K562 (cell line): ENCODE measurements at regions of chr2 and their contacts with region 1.

Region 1: DNA sequence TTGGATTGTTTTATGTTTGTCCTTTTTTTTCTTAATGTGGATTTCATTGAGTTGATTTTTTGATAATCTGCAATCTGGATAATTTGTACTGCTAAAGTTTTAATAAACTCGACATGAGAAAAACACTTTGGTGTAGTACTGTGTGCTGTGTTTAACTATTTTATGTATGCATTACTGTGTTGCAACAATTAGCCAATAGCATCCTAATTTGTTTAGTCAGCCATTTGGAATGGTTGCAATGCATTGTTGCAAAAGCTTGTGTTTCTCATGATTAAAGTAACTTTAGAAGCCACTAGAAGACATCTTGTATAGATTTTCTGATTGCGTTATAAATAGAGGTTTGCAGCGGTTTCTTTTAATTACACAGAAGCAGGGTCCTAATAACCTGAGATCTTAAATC is 53.5 kb downstream of the PPIG start:
- DNase-seq: no peak
- ATAC-seq: no peak
- H3K4me3 ChIP-seq: no peak overlapping the region
- H3K27ac ChIP-seq: no peak overlapping the region
- H3K4me1 ChIP-seq: no peaks in the 10 kb centered on the region
- H3K27me3 ChIP-seq: no peaks in the 10 kb centered on the region
- CTCF ChIP-seq: no peak
- EP300 ChIP-seq: no peak
- POLR2A ChIP-seq: no peak
- RAD21 ChIP-seq: no peak

Region 2: DNA sequence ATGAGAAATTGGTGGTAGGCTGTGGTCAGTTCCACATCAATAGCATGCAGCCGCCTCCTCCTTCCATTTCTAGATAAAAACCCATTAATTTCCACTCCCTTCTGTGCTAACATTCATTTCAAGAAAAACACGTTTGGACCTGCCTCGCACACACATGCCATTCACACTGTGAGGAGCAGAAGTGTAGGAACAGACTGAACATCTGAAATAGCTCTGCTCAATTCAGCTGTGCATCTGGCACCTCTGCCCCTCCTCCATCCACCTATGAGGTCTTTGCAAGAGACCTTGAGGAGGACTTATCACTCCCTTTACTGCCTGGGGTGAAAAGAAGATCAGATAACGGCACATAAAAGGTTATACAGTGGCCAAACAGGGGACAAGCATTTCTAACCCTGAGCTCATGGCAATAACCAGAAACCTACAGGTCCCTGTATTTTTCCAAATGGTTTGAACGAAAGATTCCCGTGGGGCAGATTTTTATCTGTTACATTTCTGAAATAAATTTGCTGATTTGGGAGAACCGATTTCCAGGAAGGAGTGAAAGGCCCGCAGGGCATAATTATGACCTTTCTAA is 244.5 kb before region 1 on chr2:
- CTCF ChIA-PET with region 1: no interaction called
- POLR2A ChIA-PET with region 1: no interaction called
- in situ Hi-C with region 1: no loop called
- intact Hi-C with region 1: no loop called
- DNase-seq: no peak
- ATAC-seq: no peak
- H3K4me3 ChIP-seq: no peak overlapping the region
- H3K27ac ChIP-seq: no peak overlapping the region
- H3K4me1 ChIP-seq: peaks cover 0 to 6% of the 10 kb centered on the region in 2 experiments; a peak in 2 of 5 replicates
- H3K27me3 ChIP-seq: peaks cover 5 to 9% of the 10 kb centered on the region in 2 experiments; a peak in 3 of 5 replicates
- CTCF ChIP-seq: no peak
- EP300 ChIP-seq: no peak
- POLR2A ChIP-seq: no peak
- RAD21 ChIP-seq: no peak

Region 3: DNA sequence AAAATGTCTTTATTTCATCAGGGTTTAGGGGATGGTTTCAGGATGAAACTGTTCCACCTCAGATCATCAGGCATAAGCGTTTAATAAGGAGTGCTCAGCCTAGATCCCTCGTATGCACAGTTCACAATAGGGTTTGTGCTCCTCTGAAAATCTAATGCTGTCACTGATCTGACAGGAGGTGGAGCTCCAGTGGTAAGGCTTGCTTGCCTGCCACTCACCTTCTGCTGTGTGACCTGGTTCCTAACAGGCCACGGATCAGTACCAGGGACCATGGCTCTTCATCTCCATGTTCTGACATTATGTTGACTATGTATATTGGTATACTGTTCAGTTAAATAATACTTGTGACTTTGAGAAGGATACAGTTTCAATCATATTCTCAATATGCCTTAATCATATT is 11.8 kb before region 1 on chr2:
- CTCF ChIA-PET with region 1: no interaction called
- POLR2A ChIA-PET with region 1: interaction called, 17 read pairs
- in situ Hi-C with region 1: no loop called
- intact Hi-C with region 1: no loop called
- DNase-seq: peak in 1 of 4 experiments; percentile 17
- ATAC-seq: peak; percentile 57
- H3K4me3 ChIP-seq: no peak overlapping the region
- H3K27ac ChIP-seq: no peak overlapping the region
- H3K4me1 ChIP-seq: no peaks in the 10 kb centered on the region
- H3K27me3 ChIP-seq: no peaks in the 10 kb centered on the region
- CTCF ChIP-seq: peak in 1 of 3 experiments; percentile 37; a peak in 2 of 6 replicates
- EP300 ChIP-seq: no peak
- POLR2A ChIP-seq: no peak
- RAD21 ChIP-seq: peak in 1 of 2 experiments; percentile 56; a peak in 3 of 4 replicates

Region 4: DNA sequence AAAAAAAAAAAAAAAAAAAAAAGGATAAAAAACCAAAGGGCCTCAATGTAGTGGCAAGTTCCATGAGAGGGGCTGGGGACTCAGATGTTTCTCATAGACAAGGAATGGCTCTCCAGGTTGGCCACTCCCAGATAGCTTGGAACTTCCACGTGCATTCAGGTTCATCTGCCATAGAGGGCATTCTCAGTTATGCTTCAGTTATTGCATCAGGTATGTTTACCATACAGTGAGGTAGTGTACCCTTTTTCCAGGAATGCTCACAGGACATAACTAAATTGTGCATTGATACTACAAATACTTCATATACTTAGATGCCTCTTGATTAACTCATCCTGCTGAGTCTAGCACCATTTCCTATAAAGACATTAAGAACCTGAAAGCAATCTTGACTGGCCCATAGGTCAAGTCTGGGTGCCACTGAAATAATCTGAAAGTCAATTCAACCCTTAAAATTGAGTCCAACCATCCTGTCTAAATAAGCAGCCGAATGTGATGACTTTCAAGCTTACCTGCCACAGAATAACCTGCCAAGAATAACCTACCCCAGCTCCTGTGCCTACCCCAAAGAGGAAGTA is 81.4 kb after region 1 on chr2:
- CTCF ChIA-PET with region 1: no interaction called
- POLR2A ChIA-PET with region 1: no interaction called
- in situ Hi-C with region 1: no loop called
- intact Hi-C with region 1: no loop called
- DNase-seq: no peak
- ATAC-seq: no peak
- H3K4me3 ChIP-seq: no peak overlapping the region
- H3K27ac ChIP-seq: no peak overlapping the region
- H3K4me1 ChIP-seq: peaks cover 18 to 38% of the 10 kb centered on the region in 2 experiments
- H3K27me3 ChIP-seq: no peaks in the 10 kb centered on the region
- CTCF ChIP-seq: no peak
- EP300 ChIP-seq: no peak; the same call in 1 of the 2 replicates
- POLR2A ChIP-seq: no peak
- RAD21 ChIP-seq: no peak

Region 5: DNA sequence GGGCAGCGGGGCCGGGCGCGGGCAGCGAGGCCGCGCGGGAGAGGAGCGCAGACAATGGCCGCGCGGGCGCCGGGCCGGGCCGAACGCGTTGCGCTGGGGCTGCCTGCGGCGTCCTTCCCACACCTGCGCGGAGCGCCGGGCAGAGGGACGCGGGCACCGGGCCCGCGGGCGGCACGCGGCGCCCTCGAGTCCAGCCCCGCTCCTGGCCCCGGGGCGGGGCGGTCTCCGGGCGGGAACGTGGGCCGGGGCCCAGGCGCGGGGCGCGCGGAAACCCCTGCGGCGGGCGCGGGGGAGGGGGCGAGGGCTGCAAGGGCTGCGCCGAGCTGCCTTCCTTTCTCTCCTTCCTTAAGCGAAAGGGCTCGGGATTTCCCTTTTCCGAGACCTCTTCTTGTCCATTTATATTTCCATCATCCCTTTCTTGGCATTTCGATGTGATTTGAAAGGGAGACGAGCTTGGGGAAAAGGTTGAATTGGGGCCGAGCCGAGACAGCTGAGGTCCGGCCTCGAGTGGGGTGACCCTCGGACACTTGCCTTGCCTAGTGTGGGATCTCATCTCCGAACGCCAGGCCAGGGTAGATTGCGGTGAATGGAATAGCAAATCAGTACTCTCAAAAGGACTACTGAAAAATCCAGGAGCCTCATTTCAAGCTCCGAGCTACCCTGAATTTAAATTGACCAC is 96.7 kb after region 1 on chr2:
- CTCF ChIA-PET with region 1: no interaction called
- POLR2A ChIA-PET with region 1: interaction called, 3 read pairs
- in situ Hi-C with region 1: no loop called
- intact Hi-C with region 1: loop called (anchors 5 kb)
- DNase-seq: peak; percentile 58 to 74 (median 70)
- ATAC-seq: peak; percentile 39
- H3K4me3 ChIP-seq: peak overlapping the region; percentile 64
- H3K27ac ChIP-seq: peak overlapping the region; percentile 69
- H3K4me1 ChIP-seq: peaks cover 22 to 27% of the 10 kb centered on the region in 2 experiments
- H3K27me3 ChIP-seq: no peaks in the 10 kb centered on the region
- CTCF ChIP-seq: no peak
- EP300 ChIP-seq: no peak
- POLR2A ChIP-seq: no peak
- RAD21 ChIP-seq: no peak